Activated naive CD4-positive, alpha-beta T cell treated with anti-CD3 and anti-CD28 coated beads for 36 hours (primary cell): ENCODE measurements at regions of chr1 and their contacts with region 1.

Region 1: GRCh38 chr1:33080885-33081553 is at the start of gene AZIN2:
- DNase-seq: peak; percentile 98
- H3K4me3 Mint-ChIP-seq: peak within 1 kb of the TSS; percentile 75
- H3K27ac Mint-ChIP-seq: peak within 1 kb of the TSS; percentile 19
- H3K4me1 Mint-ChIP-seq: peaks cover 18% of the 10 kb centered on the region
- H3K27me3 Mint-ChIP-seq: no peaks in the 10 kb centered on the region
- total RNA-seq, gene AZIN2: 1.5 to 1.6 TPM

Region 2: DNA sequence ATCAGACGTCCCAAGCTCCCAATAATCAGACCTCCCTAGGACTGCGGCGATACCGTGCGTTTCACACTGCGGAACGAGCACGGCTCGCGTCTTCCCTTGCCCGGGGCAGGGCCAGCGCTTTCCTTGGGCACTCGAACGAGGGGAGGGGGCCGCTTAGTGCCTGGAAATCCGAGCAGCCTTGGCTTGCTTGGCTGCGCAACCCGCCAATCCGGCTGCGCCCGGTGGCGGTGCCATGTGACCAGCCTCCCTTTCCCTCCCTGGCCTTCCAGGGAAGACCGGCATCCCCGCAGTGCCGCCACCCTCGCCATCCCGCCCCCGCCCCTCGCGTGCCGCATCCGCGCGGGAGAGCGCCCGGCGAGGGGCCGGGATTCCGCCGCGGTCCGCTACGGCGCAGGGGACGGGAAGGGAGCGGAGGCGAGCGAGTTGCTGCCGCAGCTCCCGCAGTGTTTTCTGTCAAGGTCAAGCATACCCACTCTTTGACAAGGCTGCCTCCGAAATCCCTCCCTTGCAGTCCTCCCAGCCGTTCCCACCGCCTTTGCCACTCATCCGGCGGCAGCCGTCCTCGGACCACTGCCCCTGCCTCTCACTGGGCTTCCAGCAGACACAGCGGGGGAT is 108.1 kb before region 1 on chr1:
- CTCF ChIA-PET with region 1: no interaction called
- intact Hi-C with region 1: no loop called
- DNase-seq: no peak
- H3K4me3 Mint-ChIP-seq: peak overlapping the region; percentile 66
- H3K27ac Mint-ChIP-seq: no peak overlapping the region
- H3K4me1 Mint-ChIP-seq: peaks cover 16% of the 10 kb centered on the region
- H3K27me3 Mint-ChIP-seq: peaks cover 23% of the 10 kb centered on the region

Region 3: GRCh38 chr1:33036526-33037503 is 44.2 kb before region 1 on chr1 and contains the start of gene AK2:
- CTCF ChIA-PET with region 1: no interaction called
- intact Hi-C with region 1: loop called (anchors 2 kb)
- DNase-seq: peak; percentile 96
- H3K4me3 Mint-ChIP-seq: peak within 1 kb of the TSS; percentile 92
- H3K27ac Mint-ChIP-seq: peak within 1 kb of the TSS; percentile 87
- H3K4me1 Mint-ChIP-seq: peaks cover 40% of the 10 kb centered on the region
- H3K27me3 Mint-ChIP-seq: no peaks in the 10 kb centered on the region
- total RNA-seq, gene AK2: 311 to 328 TPM

Region 4: GRCh38 chr1:33094971-33095604 is 14.1 kb after region 1 on chr1:
- CTCF ChIA-PET with region 1: interaction called, 51 read pairs
- intact Hi-C with region 1: no loop called
- DNase-seq: peak; percentile 40
- H3K4me3 Mint-ChIP-seq: no peak overlapping the region
- H3K27ac Mint-ChIP-seq: no peak overlapping the region
- H3K4me1 Mint-ChIP-seq: peaks cover 28% of the 10 kb centered on the region
- H3K27me3 Mint-ChIP-seq: no peaks in the 10 kb centered on the region

Region 5: DNA sequence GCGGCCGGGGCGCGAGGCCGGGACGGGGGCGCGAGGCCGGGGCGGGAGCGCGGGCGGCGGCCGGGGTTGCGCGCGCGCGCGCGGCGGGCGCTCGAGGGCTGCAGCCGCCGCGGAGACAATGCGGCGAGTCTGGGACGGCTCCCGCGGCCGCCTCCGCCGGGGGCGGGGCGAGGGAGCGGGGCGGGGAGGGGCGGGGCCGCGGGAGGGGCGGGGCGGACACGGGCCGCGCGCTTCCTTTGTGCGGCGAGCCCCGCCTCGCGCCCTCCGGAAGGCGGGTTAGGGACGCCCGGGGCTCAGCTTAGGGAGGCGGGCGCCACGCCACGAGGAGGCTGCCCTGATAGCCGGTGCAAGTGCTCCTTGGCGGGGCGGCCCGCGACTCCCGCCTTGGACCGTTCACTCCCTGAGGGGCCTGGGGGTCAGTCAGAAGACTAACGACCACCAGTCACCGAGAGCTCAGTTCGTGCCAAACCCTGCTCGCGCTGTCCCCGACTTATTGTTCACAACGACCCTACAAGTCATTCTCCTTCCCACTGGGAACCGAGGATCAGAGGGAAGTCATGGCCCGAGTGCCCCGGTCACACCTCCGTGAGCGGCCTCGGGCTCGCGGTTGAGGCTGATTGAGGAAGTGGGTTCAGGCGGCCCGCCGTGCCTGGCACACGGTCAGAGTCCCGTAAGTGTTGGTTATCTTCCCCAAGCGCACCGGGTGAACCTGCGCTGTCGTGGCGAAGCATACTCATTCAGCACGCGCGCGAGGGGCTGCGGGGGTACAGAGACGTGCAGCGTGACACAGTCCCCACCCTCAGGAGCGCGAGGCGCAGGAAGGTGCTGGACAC is 269.0 kb after region 1 on chr1:
- CTCF ChIA-PET with region 1: no interaction called
- intact Hi-C with region 1: loop called (anchors 2 kb)
- DNase-seq: peak; percentile 76
- H3K4me3 Mint-ChIP-seq: peak overlapping the region; percentile 89
- H3K27ac Mint-ChIP-seq: peak overlapping the region; percentile 84
- H3K4me1 Mint-ChIP-seq: peaks cover 45% of the 10 kb centered on the region
- H3K27me3 Mint-ChIP-seq: no peaks in the 10 kb centered on the region

Region 6: GRCh38 chr1:33654267-33654834 is 573.3 kb after region 1 on chr1:
- CTCF ChIA-PET with region 1: no interaction called
- intact Hi-C with region 1: no loop called
- DNase-seq: no peak
- H3K4me3 Mint-ChIP-seq: no peak overlapping the region
- H3K27ac Mint-ChIP-seq: no peak overlapping the region
- H3K4me1 Mint-ChIP-seq: no peaks in the 10 kb centered on the region
- H3K27me3 Mint-ChIP-seq: peaks cover 3% of the 10 kb centered on the region